Dorsolateral prefrontal cortex (tissue), 120 donors: ENCODE measurements at regions of chr16 and their contacts with region 1.

Region 1: DNA sequence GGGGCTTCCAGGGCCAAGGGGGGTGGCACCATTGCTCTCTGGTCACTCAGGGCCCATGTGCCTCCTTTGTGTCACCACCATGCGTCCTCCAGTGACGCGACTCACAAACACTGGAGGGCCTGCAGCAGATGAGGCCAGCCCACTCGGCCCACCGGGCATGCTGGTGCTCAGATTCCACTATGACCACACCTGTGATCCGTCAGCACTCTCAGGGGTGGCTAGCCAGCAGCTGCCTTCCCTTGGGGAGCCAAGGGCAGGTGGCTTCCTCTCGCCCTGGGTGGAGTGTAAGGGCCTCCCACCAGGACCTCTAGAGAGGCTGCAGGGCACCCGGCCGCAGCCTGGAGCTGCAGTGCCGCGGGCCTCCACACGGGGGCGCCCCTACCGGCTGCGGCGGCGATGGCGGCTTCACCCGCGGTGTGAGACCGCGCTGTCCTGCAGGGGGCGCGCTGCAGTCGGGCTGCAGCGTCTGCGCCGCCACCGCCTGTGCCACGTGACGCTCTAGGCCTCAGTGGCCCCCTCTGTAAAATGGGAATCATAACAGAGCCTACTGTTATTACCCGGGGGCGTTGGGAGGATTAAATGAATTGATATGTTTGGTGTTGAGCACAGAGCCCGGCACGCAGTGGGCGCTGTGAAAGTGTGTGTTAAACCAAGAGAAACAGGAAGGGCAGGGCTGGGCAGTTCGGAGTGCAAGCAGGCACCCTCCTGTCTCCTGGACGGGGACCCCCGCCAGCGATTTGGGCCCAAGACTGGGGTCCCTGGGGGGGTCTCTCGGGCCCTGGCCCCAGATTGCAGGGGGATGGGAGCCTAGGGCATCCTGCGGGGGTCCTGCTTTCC is 192.4 kb upstream of the GSE1 start:
- DNase-seq: peak in 6 of 10 donors; percentile 8 to 55 (median 30)
- H3K4me3 ChIP-seq: no peak overlapping the region
- H3K27ac ChIP-seq: no peak overlapping the region
- H3K27me3 ChIP-seq: peaks cover 0 to 4% (median 0%) of the 10 kb centered on the region in 45 donors
- CTCF ChIP-seq: peak; percentile 49 to 97 (median 88)

Region 2: GRCh38 chr16:85321509-85322271 is 99.0 kb before region 1 on chr16:
- intact Hi-C with region 1: loop called in 1 of 2 experiments (anchors 5 kb)
- DNase-seq: peak; percentile 51 to 87 (median 80)
- H3K4me3 ChIP-seq: peak overlapping the region in 10 of 59 donors; percentile 5 to 32 (median 20)
- H3K27ac ChIP-seq: peak overlapping the region in 45 of 59 donors; percentile 2 to 81 (median 55)
- H3K27me3 ChIP-seq: no peaks in the 10 kb centered on the region
- CTCF ChIP-seq: peak in 9 of 56 donors; percentile 1 to 25 (median 12)

Region 3: DNA sequence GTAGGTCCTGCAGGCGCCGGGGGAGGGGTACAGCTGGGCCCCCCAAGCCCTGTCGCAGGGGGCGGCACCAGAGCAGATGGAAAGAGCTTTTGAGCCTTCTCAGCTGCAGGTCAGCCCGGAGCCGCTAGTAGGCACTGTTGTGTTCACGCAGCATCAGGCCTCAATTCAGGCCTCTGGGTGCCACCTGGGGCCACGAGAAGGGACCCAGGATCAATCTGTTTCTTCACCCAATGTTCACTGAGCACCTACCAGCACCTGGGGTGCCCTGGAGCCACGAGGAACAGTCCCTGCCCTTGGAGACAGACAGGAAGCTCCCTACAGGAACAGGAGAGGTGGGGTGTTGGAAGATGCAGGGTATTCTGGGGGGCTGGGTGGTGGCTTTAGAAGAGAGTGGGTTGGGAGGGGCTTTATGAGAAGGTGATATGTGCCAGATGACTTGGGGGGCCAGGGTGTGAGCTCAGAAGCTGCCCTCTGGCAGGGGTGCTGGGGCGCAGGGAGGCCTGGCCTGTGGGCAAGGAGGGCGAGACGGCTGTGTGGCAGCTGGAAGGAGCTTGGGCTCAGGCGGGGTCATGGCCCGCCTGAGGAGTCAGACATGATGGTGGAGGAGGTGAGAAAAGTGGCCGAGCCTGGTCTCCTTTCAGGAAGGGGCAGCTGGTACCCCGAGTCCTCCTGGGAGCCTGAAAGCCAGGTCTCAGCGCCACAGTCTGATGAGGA is 70.5 kb after region 1 on chr16:
- intact Hi-C with region 1: no loop called
- DNase-seq: no peak
- H3K4me3 ChIP-seq: no peak overlapping the region
- H3K27ac ChIP-seq: peak overlapping the region in 11 of 59 donors; percentile 10 to 51 (median 35)
- H3K27me3 ChIP-seq: no peaks in the 10 kb centered on the region
- CTCF ChIP-seq: peak in 25 of 56 donors; percentile 13 to 43 (median 27)

Region 4: GRCh38 chr16:86059253-86060171 is 638.8 kb after region 1 on chr16:
- intact Hi-C with region 1: no loop called
- DNase-seq: peak in 8 of 10 donors; percentile 10 to 74 (median 60)
- H3K4me3 ChIP-seq: no peak overlapping the region
- H3K27ac ChIP-seq: peak overlapping the region in 57 of 59 donors; percentile 1 to 95 (median 80)
- H3K27me3 ChIP-seq: no peaks in the 10 kb centered on the region
- CTCF ChIP-seq: no peak